Naive thymus-derived CD4-positive, alpha-beta T cell (primary cell): ENCODE measurements at regions of chr2 and their contacts with region 1.

Region 1: GRCh38 chr2:168890006-168890782 is at the start of gene SPC25:
- DNase-seq: peak; percentile 71 to 88 (median 84)
- ATAC-seq: peak; percentile 99
- H3K4me3 ChIP-seq: peak within 1 kb of the TSS; percentile 67
- H3K4me3 Mint-ChIP-seq: peak within 1 kb of the TSS; percentile 80 to 99 (median 94)
- H3K27ac ChIP-seq: no peak within 1 kb of the TSS
- H3K27ac Mint-ChIP-seq: peak within 1 kb of the TSS in 7 of 9 donors; percentile 2 to 96 (median 29)
- H3K4me1 ChIP-seq: peaks cover 0 to 4% of the 10 kb centered on the region in 2 donors
- H3K4me1 Mint-ChIP-seq: peaks cover 0 to 27% (median 9%) of the 10 kb centered on the region in 7 donors
- H3K27me3 ChIP-seq: no peaks in the 10 kb centered on the region
- H3K27me3 Mint-ChIP-seq: peaks cover 0 to 36% (median 7%) of the 10 kb centered on the region in 5 donors
- total RNA-seq, gene SPC25: 0.24 to 24.7 (median 0.28) TPM in 4 of 5 experiments, not detected in the other

Region 2: DNA sequence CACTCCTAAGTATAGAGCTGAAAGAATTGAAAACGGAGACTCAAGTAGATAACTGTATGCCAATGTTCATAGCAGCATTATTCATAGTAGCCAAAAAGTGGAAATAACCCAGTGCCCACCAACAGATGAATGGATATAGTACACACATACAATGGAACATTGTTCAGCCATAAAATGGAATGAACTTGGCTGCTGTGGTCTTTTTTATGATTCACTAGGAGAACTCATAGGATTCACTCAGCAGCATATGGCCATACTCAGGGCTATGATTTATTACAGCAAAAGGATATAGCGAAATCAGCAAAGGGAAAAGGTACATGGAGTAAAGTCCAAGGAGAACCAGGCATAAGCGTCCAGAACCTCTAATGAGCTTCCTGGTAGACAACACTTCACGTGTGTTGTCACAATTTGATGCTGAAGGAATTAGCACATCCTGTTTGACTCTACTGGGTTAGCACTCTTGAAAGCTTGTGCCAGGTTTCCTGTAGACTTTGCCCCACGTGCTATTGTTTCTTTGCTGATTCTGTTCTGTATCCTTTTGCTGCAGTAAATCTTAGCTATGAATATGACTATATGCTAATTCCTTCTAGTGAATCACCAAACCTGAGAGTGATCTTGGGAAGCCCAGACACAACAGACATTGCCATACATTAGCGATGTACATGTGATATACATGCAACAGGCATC is 15.7 kb before region 1 on chr2:
- CTCF ChIA-PET with region 1: no interaction called
- POLR2A ChIA-PET with region 1: no interaction called
- intact Hi-C with region 1: loop called in 1 of 2 experiments (anchors 2 kb)
- DNase-seq: no peak
- ATAC-seq: no peak
- H3K4me3 ChIP-seq: no peak overlapping the region
- H3K4me3 Mint-ChIP-seq: no peak overlapping the region
- H3K27ac ChIP-seq: no peak overlapping the region
- H3K27ac Mint-ChIP-seq: no peak overlapping the region
- H3K4me1 ChIP-seq: no peaks in the 10 kb centered on the region
- H3K4me1 Mint-ChIP-seq: peaks cover 0 to 10% (median 0%) of the 10 kb centered on the region in 7 donors
- H3K27me3 ChIP-seq: no peaks in the 10 kb centered on the region
- H3K27me3 Mint-ChIP-seq: no peaks in the 10 kb centered on the region

Region 3: DNA sequence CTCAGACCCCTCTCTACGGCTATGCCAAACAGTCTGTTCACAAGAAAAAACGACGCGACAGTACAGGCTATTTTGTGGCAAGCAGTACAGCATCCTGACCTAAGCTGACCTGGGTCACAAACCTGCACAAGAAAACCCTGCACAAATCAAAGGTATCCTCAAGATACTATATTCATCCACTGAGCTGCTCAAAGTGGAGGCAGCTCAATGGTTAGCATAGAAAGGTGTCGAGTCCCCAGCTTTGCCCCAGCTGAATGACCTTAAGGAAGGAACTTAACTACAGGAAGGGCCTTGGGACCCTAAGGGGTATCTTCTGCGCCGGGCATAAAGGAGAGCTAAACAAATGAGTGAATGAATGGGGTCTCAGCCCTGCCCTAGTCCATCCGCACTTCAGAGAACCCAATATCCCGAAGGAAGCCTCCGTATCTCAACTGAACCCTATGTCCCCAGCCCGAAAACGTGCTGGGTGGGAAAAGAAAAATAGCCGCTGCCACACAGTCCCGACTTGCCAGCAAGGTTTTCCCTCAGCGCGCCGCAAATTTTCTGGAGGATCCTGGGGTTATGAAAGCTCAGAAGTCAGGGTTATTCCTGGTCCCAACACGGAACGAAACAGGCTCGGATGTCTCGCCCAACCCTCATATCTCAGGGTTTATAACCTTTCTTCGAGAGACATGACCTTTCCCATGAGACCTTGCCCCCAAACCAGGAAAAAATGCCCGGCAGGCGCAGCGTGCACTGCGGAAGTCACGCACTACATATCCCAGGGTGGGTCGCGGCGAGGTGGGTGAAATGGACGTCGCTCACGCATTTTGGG is 683.2 kb after region 1 on chr2 and contains the start of gene FASTKD1:
- CTCF ChIA-PET with region 1: no interaction called
- POLR2A ChIA-PET with region 1: no interaction called
- intact Hi-C with region 1: loop called in 1 of 2 experiments (anchors 5 kb)
- DNase-seq: peak; percentile 55 to 88 (median 76)
- ATAC-seq: peak; percentile 100
- H3K4me3 ChIP-seq: peak within 1 kb of the TSS; percentile 93
- H3K4me3 Mint-ChIP-seq: peak within 1 kb of the TSS; percentile 88 to 99 (median 94)
- H3K27ac ChIP-seq: peak within 1 kb of the TSS; percentile 80
- H3K27ac Mint-ChIP-seq: peak within 1 kb of the TSS; percentile 74 to 95 (median 91)
- H3K4me1 ChIP-seq: peaks cover 4 to 5% of the 10 kb centered on the region in 2 donors
- H3K4me1 Mint-ChIP-seq: peaks cover 14 to 32% (median 24%) of the 10 kb centered on the region in 7 donors
- H3K27me3 ChIP-seq: no peaks in the 10 kb centered on the region
- H3K27me3 Mint-ChIP-seq: peaks cover 0 to 4% (median 0%) of the 10 kb centered on the region in 5 donors
- total RNA-seq, gene FASTKD1: 13.5 to 43.5 (median 31.0) TPM

Region 4: GRCh38 chr2:169584005-169584877 is 694.0 kb after region 1 on chr2 and contains the start of gene PPIG:
- CTCF ChIA-PET with region 1: no interaction called
- POLR2A ChIA-PET with region 1: no interaction called
- intact Hi-C with region 1: loop called in 1 of 2 experiments (anchors 5 kb)
- DNase-seq: peak; percentile 71 to 90 (median 85)
- ATAC-seq: peak; percentile 94
- H3K4me3 ChIP-seq: peak within 1 kb of the TSS; percentile 89
- H3K4me3 Mint-ChIP-seq: peak within 1 kb of the TSS; percentile 90 to 100 (median 99)
- H3K27ac ChIP-seq: peak within 1 kb of the TSS; percentile 99
- H3K27ac Mint-ChIP-seq: peak within 1 kb of the TSS; percentile 97 to 100 (median 100)
- H3K4me1 ChIP-seq: peaks cover 17 to 29% of the 10 kb centered on the region in 2 donors
- H3K4me1 Mint-ChIP-seq: peaks cover 12 to 46% (median 40%) of the 10 kb centered on the region in 7 donors
- H3K27me3 ChIP-seq: no peaks in the 10 kb centered on the region
- H3K27me3 Mint-ChIP-seq: peaks cover 0 to 4% (median 0%) of the 10 kb centered on the region in 5 donors
- total RNA-seq, gene PPIG: 50.6 to 86.1 (median 73.7) TPM

Region 5: DNA sequence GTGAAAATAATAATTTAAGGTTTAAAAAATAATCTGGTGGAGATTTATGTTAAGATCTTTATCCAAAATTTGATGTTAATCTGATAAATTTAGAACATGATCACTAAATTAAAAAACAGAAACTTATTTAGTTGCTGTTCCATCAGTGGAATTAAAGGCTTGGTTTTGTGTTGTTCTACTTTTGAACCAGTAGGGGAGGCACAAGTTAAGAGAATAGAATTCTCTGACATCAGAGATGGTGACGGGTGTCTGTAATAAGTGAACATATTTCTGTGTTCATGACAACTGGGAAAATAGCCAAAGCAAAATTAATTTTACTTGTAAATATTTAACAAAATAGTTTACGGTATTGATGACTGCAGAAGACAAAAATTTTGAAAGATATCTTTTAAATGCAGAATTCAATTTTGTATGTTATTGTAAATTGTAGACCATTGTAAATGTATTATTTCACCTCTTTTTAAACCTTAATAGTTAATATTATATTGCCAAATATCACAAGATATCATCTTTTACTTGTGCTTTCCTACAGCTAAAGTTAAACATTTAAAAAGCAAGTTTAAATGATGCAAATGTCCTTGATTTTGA is 1043.0 kb after region 1 on chr2:
- CTCF ChIA-PET with region 1: no interaction called
- POLR2A ChIA-PET with region 1: no interaction called
- intact Hi-C with region 1: loop called in 1 of 2 experiments (anchors 5 kb)
- DNase-seq: peak in 2 of 9 donors; percentile 6 to 9
- ATAC-seq: no peak
- H3K4me3 ChIP-seq: no peak overlapping the region
- H3K4me3 Mint-ChIP-seq: no peak overlapping the region
- H3K27ac ChIP-seq: no peak overlapping the region
- H3K27ac Mint-ChIP-seq: no peak overlapping the region
- H3K4me1 ChIP-seq: no peaks in the 10 kb centered on the region
- H3K4me1 Mint-ChIP-seq: peaks cover 0 to 9% (median 0%) of the 10 kb centered on the region in 7 donors
- H3K27me3 ChIP-seq: no peaks in the 10 kb centered on the region
- H3K27me3 Mint-ChIP-seq: no peaks in the 10 kb centered on the region